ENCODE measurements at regions of chr19 and their contacts with region 1.

Region 1: DNA sequence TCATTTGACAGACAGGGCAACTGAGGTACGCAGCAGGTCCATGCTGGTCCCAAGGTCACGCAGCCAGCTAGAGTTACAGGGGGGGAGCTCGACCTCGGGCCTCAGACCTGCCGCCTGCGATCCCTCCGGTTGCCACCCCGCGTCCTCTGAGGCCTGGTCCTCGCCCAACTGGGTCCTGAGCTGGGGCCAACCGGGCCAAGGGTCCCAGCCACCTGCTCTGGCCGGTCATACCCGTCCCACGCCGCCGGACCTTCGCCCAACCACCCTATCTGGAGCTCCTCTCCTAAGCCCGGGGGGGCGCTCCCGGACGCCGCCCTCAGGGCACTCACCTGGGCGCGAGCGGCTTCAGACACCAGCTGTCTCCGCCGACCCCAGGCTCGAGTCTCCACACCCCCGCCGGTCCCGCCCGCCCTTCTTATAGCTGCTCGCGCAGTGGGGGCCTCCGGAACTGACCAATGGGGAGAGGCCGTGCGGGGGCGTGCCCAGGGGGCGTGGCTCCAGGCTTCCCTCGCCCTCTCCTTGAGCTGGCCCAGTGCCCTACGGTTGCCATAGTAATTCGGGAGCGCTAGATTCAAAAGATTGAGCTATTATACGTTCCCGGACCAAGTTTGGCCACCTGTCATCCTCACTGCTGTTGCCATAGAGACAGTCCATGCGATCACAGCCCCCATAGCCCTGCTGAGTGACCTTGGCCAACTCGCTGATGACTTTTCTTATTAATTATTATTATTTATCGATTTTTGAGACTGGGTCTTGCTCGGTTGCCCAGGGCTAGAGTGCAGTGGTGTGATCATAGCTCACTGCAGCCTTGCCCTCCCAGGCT is at the start of gene PLIN5:
- DNase-seq: peak; percentile 97
- ATAC-seq: peak; percentile 93
- H3K4me3 Mint-ChIP-seq: peak within 1 kb of the TSS; percentile 53
- H3K27ac Mint-ChIP-seq: no peak within 1 kb of the TSS
- H3K4me1 Mint-ChIP-seq: peaks cover 3% of the 10 kb centered on the region; the same call in 1 of the 2 replicates
- H3K27me3 Mint-ChIP-seq: peaks cover 60% of the 10 kb centered on the region
- CTCF ChIP-seq: no peak
- total RNA-seq, gene PLIN5: 3.3 to 4.2 TPM (median 3.9 TPM) in 3 replicates

Region 2: DNA sequence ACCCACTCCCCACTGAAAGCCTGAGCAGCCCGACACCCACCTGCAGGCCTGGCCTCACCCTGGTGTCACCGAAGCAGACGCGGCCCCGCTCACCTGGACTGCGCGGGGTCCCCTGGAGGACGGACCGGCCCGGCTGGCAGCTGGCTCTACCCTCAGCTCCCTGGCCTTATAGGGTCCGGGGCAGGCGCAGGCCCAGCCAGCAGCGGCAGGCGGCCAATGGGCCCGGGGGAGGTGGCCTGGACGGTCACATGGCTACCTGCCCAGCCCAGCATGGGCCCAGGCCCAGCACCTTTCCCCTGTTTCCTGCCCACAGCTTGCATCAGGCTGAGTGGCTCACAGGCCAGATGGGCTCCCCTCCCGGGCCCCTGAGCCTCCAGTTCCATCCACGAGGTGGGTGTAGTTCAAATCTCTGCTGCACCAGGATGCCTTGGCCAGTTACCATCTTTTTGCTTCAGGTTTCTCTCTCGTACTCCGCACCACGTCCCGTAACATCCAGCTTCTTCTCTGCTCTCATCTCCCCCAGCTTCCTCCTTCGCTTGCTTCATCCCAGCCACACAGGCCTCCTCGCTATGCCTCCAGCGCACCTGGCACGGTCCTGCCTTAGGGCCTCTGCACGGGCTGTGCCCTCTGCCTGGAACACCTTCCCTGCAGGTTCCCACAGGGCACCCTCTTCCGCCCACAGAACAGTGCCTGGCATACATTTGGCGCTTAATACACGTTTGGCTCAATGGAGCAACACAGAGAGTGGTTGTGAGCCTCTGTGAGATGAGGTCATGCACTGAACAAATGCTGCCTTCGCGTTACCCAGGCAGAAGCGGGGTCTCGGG is 16.5 kb before region 1 on chr19 and contains the start of gene PLIN4:
- CTCF ChIA-PET with region 1: interaction called, 285 read pairs
- POLR2A ChIA-PET with region 1: no interaction called
- DNase-seq: peak; percentile 34
- ATAC-seq: peak; percentile 50
- H3K4me3 Mint-ChIP-seq: no peak within 1 kb of the TSS
- H3K27ac Mint-ChIP-seq: no peak within 1 kb of the TSS
- H3K4me1 Mint-ChIP-seq: no peaks in the 10 kb centered on the region
- H3K27me3 Mint-ChIP-seq: peaks cover 78% of the 10 kb centered on the region
- CTCF ChIP-seq: no peak
- total RNA-seq, gene PLIN4: 0.35 to 0.62 TPM (median 0.57 TPM) in 3 replicates

Region 3: GRCh38 chr19:4547303-4548237 is 12.5 kb after region 1 on chr19:
- CTCF ChIA-PET with region 1: interaction called, 17 read pairs
- POLR2A ChIA-PET with region 1: no interaction called
- DNase-seq: peak; percentile 40
- ATAC-seq: no peak
- H3K4me3 Mint-ChIP-seq: no peak overlapping the region
- H3K27ac Mint-ChIP-seq: no peak overlapping the region
- H3K4me1 Mint-ChIP-seq: no peaks in the 10 kb centered on the region
- H3K27me3 Mint-ChIP-seq: no peaks in the 10 kb centered on the region
- CTCF ChIP-seq: no peak

Measured in WTC11 (cell line).